ENCODE measurements at regions of chr10 and their contacts with region 1.

Region 1: DNA sequence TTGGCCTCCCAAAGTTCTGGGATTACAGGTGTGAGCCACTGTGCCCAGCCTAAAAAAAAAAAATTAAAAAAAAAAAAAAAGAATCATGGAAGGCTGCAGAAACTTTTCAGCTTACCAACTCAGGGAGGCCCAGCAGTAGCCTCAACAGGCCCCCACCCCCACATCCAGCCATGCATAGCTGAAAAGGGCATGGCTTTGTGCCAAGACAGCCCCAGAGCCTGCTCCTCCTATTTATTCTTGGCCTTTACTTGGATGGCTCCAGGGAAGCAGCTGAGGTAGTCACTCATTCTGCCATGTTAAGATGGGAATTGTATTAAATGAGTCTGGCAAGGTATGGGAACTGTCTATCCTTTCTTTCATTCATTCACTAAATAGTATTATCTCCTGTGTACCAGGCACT is 13.7 kb upstream of the CNNM2 start:
- DNase-seq: no peak
- H3K4me3 Mint-ChIP-seq: no peak overlapping the region
- H3K27ac Mint-ChIP-seq: no peak overlapping the region
- H3K4me1 Mint-ChIP-seq: no peaks in the 10 kb centered on the region
- H3K27me3 Mint-ChIP-seq: no peaks in the 10 kb centered on the region

Region 2: DNA sequence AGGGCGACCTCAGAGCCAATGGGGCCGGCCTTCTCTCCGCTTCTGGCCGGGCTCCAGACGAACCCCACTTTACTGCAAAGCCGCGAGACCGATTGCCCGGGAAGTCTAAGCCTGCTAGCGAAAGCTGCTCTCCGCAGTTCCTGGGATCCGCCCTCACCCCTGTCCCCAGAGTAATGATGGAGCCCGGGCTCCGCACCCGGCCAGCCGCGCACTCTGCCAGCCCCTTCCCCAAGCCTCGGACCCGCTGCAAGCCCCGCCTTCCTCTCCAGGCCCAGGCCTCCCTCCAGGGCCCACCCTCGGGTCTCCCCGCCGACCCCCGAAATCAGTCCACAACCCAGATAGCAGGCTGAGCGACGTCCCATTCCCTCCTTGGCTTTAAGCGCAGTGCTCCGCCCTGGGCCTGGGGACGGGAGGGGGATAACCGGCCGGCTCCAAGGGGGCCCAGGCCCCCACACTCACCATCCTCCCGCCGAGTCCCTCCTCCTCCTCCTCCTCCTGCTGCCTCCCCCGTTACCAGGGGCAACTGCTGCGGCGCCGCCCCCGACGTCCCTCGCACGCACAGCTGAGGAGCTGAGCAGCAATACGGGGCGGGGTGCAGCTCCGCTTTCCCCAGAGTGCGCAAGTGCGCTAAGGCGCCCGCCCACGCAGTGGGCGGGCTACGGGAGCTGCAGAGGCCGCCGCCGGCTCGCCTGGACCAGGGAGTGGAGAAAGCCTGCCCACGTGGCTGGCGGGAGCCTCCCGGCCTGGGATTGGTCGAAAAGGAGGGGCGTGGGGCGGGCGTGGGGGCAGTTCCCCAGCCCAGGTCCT is 190.3 kb before region 1 on chr10 and contains the start of gene ARL3:
- CTCF ChIA-PET with region 1: interaction called, 15 read pairs
- DNase-seq: peak; percentile 98
- H3K4me3 Mint-ChIP-seq: peak within 1 kb of the TSS; percentile 75
- H3K27ac Mint-ChIP-seq: peak within 1 kb of the TSS; percentile 85
- H3K4me1 Mint-ChIP-seq: peaks cover 45% of the 10 kb centered on the region
- H3K27me3 Mint-ChIP-seq: no peaks in the 10 kb centered on the region

Region 3: DNA sequence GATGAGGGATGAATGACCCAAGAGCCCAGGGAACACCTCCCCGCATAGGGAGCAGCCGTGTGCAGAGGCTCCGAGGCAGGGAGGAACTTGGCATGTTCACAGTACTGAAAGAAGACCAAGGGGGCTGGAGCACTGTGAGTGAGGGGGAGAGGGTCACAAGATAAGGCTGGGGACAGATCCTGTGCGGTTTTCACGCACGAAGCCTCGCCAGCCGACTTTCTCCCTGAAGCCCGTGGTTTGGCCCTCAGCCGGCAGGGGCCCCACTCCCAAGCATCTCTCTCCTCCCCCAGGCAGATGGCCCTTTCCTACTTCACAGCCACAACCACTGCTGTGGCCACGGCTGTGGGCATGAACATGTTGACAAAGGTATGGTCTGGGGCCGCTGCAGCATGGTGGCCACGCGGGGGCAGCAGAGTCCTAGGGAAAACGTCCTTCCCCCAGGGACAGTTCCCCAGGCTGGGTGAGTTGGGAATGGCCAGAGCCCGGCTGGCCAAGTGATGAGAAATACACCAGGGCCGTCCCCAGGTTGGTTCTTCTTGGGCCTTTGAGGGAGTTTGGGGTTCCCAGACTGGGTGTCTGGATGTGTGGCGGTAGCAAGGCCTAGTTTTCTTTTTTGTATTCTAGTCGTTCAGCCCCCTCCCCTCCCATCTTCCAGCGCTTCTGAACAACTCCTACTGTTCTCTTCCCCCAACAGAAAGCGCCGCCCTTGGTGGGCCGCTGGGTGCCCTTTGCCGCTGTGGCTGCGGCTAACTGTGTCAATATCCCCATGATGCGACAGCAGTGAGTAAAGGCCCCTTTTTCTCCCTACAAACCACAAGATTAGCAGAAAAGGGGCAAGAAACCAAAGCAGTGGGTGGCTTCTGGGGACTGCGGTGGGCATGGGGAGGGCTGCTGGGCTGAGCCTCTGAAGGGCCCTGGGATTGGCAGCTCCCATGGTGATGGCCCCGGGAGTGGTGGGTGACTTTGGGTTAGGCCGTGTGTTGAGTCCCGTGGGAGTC is 175.0 kb before region 1 on chr10:
- CTCF ChIA-PET with region 1: interaction called, 12 read pairs
- DNase-seq: peak; percentile 76
- H3K4me3 Mint-ChIP-seq: no peak overlapping the region
- H3K27ac Mint-ChIP-seq: no peak overlapping the region
- H3K4me1 Mint-ChIP-seq: peaks cover 2% of the 10 kb centered on the region
- H3K27me3 Mint-ChIP-seq: no peaks in the 10 kb centered on the region

Region 4: GRCh38 chr10:102752934-102753664 is 151.2 kb before region 1 on chr10:
- CTCF ChIA-PET with region 1: interaction called, 11 read pairs
- DNase-seq: peak; percentile 32
- H3K4me3 Mint-ChIP-seq: no peak overlapping the region
- H3K27ac Mint-ChIP-seq: no peak overlapping the region
- H3K4me1 Mint-ChIP-seq: peaks cover 39% of the 10 kb centered on the region
- H3K27me3 Mint-ChIP-seq: no peaks in the 10 kb centered on the region

Region 5: DNA sequence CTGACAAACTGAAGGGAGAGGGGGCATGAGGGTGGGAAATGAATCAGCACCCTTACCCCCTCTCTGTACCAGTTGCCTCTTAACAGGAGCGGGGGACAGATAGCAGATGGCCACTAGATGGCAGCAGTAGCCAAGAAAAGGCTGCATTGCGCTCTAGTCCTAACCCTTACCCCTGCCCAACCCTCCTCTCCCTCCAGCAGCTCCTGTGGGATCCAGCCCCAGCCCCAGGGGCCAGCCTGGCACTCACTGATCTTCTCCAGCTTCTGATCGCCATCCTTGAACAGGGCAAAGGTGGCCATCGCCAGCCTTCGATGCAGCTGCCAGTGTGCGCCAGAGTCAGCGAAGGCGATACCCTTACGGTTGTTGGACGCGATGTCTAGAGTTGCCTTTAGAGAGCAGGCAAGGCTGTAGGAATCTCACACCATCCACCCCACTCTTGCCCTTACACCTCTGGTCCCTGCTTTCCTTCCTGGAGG is 69.3 kb before region 1 on chr10:
- CTCF ChIA-PET with region 1: interaction called, 72 read pairs
- DNase-seq: peak; percentile 85
- H3K4me3 Mint-ChIP-seq: no peak overlapping the region
- H3K27ac Mint-ChIP-seq: no peak overlapping the region
- H3K4me1 Mint-ChIP-seq: no peaks in the 10 kb centered on the region
- H3K27me3 Mint-ChIP-seq: peaks cover 15% of the 10 kb centered on the region

Region 6: DNA sequence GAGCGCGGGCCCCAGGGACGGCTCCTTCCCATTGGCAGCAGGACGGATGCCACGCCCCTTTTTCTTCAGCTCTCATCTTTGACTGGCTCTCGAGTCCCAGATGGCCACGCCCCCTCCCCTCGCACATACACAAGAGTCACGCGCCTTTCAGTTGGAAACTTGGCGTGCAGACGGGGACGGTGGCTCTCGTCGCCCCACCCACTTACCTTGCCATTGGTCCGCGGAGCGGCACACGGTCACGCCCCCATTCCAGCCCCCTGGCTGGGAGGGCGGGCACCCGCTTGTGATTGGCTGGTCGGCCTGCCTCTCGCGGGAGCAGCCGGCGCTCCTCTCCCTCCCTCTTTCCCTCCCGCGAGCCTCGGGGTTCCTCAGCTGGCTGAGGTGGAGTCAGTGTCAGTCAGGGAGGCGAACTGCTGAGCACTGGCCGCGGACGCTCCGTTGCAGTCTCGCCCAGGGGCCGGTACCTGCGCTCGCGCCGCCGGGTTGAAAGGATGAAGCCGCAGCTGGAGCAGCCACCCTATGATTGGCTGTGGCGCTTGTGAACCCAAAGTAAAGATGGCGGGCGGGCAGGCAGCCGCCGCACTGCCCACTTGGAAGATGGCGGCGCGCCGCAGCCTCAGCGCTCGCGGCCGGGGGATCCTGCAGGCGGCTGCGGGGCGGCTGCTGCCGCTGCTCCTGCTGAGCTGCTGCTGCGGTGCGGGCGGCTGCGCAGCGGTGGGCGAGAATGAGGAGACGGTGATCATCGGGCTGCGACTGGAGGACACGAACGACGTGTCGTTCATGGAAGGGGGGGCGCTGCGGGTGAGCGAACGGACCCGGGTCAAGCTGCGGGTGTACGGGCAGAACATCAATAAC is 13.8 kb after region 1 on chr10 and contains the start of gene CNNM2:
- CTCF ChIA-PET with region 1: interaction called, 16 read pairs
- DNase-seq: peak; percentile 100
- H3K4me3 Mint-ChIP-seq: peak within 1 kb of the TSS; percentile 91
- H3K27ac Mint-ChIP-seq: peak within 1 kb of the TSS; percentile 93
- H3K4me1 Mint-ChIP-seq: peaks cover 67% of the 10 kb centered on the region
- H3K27me3 Mint-ChIP-seq: peaks cover 15% of the 10 kb centered on the region

Region 7: GRCh38 chr10:103069453-103070331 is 165.3 kb after region 1 on chr10:
- CTCF ChIA-PET with region 1: interaction called, 11 read pairs
- DNase-seq: peak; percentile 83
- H3K4me3 Mint-ChIP-seq: no peak overlapping the region
- H3K27ac Mint-ChIP-seq: peak overlapping the region; percentile 75
- H3K4me1 Mint-ChIP-seq: peaks cover 40% of the 10 kb centered on the region
- H3K27me3 Mint-ChIP-seq: no peaks in the 10 kb centered on the region